ENCODE measurements at regions of chr9 and their contacts with region 1.

Region 1: DNA sequence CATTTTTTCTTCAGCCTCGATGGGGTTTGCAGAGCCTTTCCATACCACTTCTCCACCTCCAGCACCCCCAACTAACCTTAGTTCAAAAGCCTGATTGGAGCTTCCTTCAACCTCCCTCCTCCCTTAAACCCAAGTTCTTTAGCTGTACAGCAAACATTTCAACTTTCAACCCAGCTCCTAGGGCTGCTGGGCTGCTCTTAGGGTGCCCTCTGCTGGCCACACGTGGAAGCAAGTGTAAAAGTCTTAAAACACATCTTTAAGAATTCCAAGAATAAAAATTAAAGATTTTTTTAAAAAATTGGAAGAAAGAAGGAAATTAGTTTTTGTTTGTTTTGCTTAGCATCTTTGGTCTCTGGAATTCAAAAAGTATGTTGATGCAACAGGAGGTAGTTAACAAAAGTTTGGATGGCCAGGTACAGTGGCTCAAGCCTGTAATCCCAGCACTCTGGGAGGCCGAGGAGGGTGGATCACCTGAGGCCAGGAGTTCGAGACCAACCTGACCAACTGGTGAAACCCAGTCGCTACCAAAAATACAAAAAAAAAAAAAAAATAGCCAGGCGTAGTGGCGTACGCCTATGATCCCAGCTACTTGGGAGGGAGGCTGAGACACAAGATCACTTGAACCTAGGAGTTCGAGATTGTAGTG is 15.5 kb upstream of the HSD17B3 start:
- DNase-seq: peak; percentile 19
- H3K4me3 ChIP-seq: no peak overlapping the region
- CTCF ChIP-seq: peak; percentile 72

Region 2: DNA sequence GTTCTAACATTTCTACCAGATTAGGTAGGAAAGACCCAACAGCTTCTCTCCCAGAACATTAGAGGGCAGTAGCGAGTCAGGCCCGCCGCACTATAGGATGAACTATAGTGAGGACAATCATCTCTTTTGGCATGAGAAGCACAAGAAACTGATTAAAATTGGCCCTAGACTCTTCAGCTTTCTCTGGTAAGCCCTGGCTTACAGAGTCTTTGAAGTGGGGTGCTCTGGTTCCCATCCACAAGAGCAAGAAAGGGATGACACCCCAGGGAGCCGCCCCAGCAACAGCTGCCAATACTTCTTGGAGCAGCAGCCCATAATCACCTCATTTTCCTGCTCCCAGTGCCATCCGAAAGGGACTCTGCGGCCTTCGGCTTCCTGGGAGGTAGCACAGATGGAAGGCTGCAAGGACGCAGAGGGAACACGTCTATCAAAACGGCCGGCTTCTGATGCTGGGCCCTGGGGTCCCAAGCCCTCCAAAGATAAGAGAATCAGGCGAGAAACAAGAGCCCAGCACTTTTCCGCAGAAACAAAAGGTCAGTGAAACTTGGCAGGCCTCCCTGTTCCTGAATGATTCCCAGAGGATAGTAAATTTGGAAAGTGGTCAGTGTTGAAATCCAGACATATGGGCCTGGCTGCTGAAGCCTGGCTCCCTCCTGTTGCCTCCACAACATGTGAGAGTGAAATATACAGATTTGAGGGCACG is 84.8 kb before region 1 on chr9:
- CTCF ChIA-PET with region 1: interaction called, 36 read pairs
- POLR2A ChIA-PET with region 1: no interaction called
- DNase-seq: no peak
- H3K4me3 ChIP-seq: no peak overlapping the region
- CTCF ChIP-seq: peak; percentile 83

Region 3: GRCh38 chr9:96305171-96305570 is 12.3 kb before region 1 on chr9:
- CTCF ChIA-PET with region 1: interaction called, 20 read pairs
- POLR2A ChIA-PET with region 1: no interaction called
- DNase-seq: no peak
- H3K4me3 ChIP-seq: no peak overlapping the region
- CTCF ChIP-seq: no peak

Region 4: DNA sequence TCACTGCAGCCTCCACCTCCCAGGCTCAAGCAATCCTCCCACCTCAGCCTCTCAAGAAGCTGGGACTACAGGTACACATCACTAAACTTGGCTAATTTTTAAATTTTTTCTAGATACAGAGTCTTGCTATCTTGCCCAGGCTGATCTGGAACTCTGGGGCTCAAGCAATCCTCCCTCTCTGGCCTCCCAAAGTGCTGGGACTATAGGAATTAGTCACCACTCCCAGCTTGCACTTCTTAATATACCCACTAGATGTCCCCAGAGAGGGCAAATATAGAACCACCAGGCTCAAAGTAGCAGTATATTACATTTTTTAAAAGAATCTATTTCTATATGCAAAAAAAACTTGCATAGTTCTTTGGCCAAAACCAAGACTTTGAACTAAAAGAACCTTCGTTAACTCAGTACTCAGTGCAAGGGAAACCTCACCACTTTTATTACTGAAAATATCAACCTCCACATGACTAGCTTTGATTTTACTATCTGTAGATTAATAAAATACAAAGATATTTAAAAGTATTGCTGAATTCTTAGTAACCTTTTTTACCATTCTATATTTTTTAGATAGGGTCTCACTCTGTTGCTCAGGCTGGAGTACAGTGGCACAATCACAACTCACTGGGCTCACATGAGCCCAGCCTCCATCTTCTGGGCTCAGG is 10.4 kb after region 1 on chr9:
- CTCF ChIA-PET with region 1: interaction called, 30 read pairs
- POLR2A ChIA-PET with region 1: no interaction called
- DNase-seq: peak; percentile 3
- H3K4me3 ChIP-seq: no peak overlapping the region
- CTCF ChIP-seq: peak; percentile 51

Region 5: DNA sequence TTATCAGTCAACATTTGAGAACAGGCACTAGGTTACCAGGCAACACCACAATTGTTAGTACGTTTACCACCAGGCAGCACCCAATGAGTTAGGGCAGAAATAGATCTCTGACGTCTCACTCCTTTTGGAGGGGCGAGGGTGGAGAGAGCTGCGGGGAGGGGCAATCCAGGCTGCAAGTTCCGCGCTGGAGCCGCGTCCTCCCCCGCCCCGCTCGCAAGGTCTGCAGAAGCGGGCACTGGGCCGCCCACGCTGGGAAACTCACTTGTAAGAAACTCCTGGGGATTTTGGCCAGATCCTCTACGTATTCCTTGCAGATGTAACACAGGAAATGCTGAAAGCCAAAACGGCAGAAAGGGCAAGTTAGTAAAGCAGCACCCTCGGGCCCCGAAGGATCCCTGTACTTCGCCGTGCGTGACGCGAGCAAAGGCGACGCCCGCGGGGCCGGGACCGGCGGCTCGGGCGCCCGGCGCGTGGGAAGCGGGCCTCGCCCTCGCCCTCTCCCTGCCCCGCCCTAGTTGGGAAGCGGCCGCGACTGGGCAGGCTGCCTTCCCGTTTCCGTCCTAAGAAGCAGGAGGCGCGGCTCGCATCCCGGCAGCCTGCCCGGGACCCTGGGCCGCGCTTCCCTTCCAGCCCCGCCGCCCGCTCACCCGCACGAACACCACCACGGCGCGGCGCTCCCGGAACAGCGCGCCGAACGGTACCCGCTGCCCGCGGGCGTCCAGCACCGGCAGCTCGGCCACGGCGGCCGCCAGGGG is 337.2 kb after region 1 on chr9:
- CTCF ChIA-PET with region 1: interaction called, 23 read pairs
- POLR2A ChIA-PET with region 1: no interaction called
- DNase-seq: no peak
- H3K4me3 ChIP-seq: peak overlapping the region; percentile 68
- CTCF ChIP-seq: peak; percentile 8

Region 6: DNA sequence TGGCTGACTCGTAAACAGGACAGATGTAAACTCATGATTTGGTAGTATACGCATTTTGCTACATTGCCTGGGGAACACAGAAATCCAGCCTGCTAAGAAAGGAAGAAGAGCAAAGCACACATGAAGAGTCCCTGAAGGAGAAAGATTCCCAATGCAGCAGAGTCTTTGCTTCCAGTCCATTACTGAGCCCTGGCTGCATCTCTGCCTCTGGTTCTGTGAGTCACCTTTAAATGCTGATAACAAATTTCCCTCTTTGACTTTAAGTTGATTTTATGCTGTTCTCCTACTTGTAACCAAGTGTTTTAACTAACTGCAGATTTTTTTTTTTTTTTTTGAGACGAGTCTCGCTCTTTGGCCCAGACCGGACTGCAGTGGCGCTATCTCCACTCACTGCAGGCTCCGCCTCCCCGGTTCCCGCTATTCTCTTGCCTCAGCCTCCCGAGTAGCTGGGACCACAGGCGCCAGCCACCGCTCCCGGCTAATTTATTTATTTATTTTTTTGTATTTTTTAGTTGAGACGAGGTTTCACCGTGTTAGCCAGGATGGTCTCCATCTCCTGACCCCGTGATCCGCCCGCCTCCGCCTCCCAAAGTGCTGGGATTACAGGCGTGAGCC is 346.2 kb after region 1 on chr9:
- CTCF ChIA-PET with region 1: interaction called, 190 read pairs
- POLR2A ChIA-PET with region 1: no interaction called
- DNase-seq: no peak
- H3K4me3 ChIP-seq: no peak overlapping the region
- CTCF ChIP-seq: no peak